Sigmoid colon (tissue), 7 donors: ENCODE measurements at regions of chr12 and their contacts with region 1.

Region 1: DNA sequence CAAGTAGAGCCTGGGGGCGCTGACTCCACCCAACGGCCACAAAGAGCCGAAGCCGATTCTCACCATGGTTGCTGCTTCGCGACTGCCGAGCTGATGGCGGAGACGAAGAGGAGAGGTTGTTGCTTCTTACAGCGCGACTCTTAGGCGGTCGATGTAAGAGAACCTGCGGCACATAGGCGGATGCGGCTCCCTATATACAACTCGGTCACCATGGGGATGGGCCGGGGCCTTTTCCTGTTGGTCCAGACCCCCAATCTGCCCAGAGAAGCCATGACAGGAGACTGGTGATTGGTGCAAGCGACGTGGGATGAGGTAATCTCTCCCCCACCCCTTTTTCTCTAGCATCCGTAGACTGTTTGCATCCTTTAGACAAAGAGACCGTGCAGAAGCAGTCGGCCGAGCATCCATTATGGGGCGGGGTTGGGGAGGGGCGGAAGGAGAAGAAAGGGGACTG is at the start of gene TUBA1A:
- DNase-seq: peak; percentile 99
- H3K4me3 ChIP-seq: peak within 1 kb of the TSS; percentile 78 to 99 (median 94)
- H3K27ac ChIP-seq: peak within 1 kb of the TSS; percentile 95 to 100 (median 100)
- H3K4me1 ChIP-seq: peaks cover 0 to 33% (median 26%) of the 10 kb centered on the region in 4 donors
- H3K27me3 ChIP-seq: no peaks in the 10 kb centered on the region
- CTCF ChIP-seq: no peak
- EP300 ChIP-seq: no peak
- POLR2A ChIP-seq: peak; percentile 95 to 96
- total RNA-seq, gene TUBA1A: 614 to 677 (median 635) TPM

Region 2: DNA sequence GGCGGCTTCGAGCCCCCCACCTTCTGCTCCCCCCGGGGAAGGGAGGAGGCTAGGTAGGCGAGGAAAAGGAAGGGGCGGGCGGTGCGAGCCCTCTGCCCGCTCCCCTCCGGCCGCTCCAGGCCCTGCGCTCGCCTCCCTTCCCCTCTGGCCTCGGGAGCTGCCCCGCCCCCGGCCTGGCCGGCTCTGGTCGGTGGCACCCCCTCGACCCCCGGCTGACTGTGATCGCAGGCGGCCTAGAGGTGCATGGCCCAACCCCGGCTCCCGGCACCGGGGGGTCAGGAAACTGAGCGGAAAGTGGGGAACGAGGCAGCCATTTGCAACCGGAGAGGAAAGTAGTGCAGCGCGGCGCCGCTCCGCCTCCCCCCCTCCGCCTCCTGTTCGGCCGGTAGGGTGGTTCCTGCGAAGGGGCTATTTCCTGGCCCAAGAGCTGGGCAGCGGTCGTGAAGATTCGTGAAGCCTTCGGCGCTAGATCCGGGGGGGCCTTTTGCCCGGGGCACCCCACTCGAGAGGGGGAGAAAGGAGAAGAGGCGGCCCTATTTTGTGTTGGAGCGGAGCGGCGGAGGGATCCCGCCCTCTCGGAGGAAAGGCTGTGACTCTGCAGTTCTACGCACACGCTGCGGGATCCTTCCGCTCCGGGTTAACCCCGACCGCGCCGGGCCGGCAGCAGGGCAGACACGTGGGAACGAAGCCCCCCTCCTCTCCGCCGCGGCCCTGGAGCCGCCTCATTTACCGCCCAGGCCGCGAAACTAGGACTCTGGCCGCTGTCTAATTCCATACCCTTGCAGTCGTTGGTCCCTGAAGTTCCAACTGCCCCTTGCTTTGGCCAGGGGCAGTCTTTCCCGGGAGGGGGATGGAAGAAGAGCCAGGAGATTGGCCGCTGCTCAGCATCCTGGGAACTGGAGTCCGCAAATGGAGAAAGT is 128.4 kb before region 1 on chr12 and contains the start of gene KMT2D:
- intact Hi-C with region 1: loop called (anchors 5 kb)
- DNase-seq: peak; percentile 96
- H3K4me3 ChIP-seq: peak within 1 kb of the TSS; percentile 87 to 100 (median 98)
- H3K27ac ChIP-seq: peak within 1 kb of the TSS; percentile 94 to 99 (median 96)
- H3K4me1 ChIP-seq: peaks cover 0 to 51% (median 42%) of the 10 kb centered on the region in 4 donors
- H3K27me3 ChIP-seq: no peaks in the 10 kb centered on the region
- CTCF ChIP-seq: peak; percentile 46 to 86 (median 67)
- EP300 ChIP-seq: peak in 1 of 4 donors; percentile 36
- POLR2A ChIP-seq: peak; percentile 45 to 58
- total RNA-seq, gene KMT2D: 18.2 to 52.9 (median 30.6) TPM

Region 3: DNA sequence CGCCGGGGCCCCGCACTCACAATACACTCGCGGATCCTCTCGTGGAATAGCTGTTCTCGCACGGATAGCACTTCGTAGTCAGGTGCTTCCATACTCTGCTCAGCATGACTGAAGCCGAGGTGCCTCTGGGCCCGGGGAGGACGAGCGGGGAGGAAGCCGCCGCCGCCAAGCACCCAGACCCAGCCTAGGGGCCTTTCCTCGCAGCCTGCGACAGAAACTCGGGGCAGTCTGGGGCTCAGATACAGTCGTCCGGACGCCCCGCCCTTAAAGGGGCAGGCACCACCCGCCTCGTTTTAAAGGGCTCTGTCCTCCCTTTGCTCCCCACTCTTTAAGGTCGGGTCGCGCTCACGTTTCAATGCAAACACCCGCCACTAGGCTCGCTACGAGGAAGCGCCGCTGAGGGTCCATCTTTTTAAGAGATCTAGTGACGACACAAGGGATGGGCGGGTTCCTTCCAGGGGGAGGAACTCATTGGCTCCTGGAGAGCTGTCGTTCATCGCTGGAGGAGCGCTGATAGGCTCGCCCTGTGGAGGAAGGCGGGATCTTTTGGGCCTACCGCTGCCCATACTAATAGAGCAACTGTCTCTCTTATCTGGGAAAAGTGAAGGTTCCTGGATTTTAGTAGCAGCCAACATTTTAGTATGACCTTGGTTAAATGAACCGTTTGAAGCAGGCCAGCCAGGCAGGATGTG is 78.3 kb before region 1 on chr12 and contains the start of gene LMBR1L:
- intact Hi-C with region 1: loop called (anchors 5 kb)
- DNase-seq: peak; percentile 99
- H3K4me3 ChIP-seq: peak within 1 kb of the TSS; percentile 72 to 96 (median 82)
- H3K27ac ChIP-seq: peak within 1 kb of the TSS; percentile 94 to 99 (median 97)
- H3K4me1 ChIP-seq: peaks cover 0 to 48% (median 45%) of the 10 kb centered on the region in 4 donors
- H3K27me3 ChIP-seq: no peaks in the 10 kb centered on the region
- CTCF ChIP-seq: peak in 3 of 4 experiments; percentile 41 to 76 (median 64)
- EP300 ChIP-seq: no peak
- POLR2A ChIP-seq: peak; percentile 87 to 92
- total RNA-seq, gene LMBR1L: 34.6 to 82.3 (median 51.5) TPM

Region 4: DNA sequence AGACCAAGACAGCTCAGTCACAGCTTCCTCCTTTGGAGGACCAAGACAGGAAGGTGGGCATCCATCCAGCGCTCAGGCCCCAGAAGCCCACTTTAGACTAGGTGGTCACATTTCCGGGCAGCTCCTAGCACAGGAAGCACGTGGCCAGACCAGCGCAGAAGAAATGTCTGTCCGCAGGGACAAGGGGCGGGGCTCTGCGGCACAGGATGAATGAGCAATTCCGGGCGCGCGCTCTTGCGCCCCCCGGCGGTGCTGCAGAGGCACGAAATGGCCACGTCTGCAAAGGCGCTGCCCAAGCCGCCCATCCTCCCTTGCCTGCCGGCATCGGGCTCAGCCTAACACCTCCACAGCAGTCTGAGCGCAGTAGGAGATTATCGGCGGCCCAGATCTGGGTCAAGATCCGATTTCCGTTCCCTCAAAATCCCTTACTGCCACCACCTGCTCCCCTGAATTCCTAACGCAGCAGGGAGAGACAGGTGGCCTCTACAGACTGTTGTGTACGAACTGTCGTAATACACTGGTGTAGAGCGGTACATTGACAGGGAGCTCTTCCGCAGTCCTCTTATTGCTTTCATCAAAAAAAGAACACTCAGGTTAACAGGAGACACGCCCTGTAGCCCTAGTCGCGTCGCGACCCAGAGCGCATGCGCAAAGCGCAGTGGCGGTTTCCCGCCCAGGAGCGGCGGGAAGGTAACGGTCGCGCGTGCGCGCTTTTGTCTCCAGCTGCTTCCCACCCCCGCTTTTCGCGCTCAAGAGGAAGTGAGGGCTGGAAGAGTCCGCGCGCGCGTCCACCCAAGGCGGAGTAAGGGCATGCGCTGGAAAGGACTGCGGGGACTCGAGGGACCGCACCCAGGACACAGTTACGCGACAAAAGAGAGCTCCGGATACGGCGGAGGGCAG is 58.5 kb before region 1 on chr12:
- intact Hi-C with region 1: loop called (anchors 2 kb)
- DNase-seq: peak; percentile 97
- H3K4me3 ChIP-seq: peak overlapping the region; percentile 94 to 99 (median 98)
- H3K27ac ChIP-seq: peak overlapping the region; percentile 99 to 100 (median 100)
- H3K4me1 ChIP-seq: peaks cover 0 to 30% (median 27%) of the 10 kb centered on the region in 4 donors
- H3K27me3 ChIP-seq: no peaks in the 10 kb centered on the region
- CTCF ChIP-seq: peak; percentile 82 to 96 (median 90)
- EP300 ChIP-seq: no peak
- POLR2A ChIP-seq: no peak

Region 5: GRCh38 chr12:49264738-49265515 is 76.0 kb after region 1 on chr12 and contains the start of gene TUBA1C:
- intact Hi-C with region 1: loop called (anchors 2 kb)
- DNase-seq: peak; percentile 96
- H3K4me3 ChIP-seq: peak within 1 kb of the TSS; percentile 51 to 78 (median 74)
- H3K27ac ChIP-seq: peak within 1 kb of the TSS; percentile 90 to 94 (median 90)
- H3K4me1 ChIP-seq: peaks cover 0 to 42% (median 22%) of the 10 kb centered on the region in 4 donors
- H3K27me3 ChIP-seq: no peaks in the 10 kb centered on the region
- CTCF ChIP-seq: no peak
- EP300 ChIP-seq: no peak
- POLR2A ChIP-seq: peak; percentile 57 to 84
- total RNA-seq, gene TUBA1C: 54.8 to 108 (median 87.2) TPM